Calu3 (cell line): ENCODE measurements at regions of chr11 and their contacts with region 1.

Region 1: GRCh38 chr11:113664069-113664980 is 41.8 kb downstream of the TMPRSS5 start:
- DNase-seq: peak; percentile 23
- H3K4me3 Mint-ChIP-seq: peak overlapping the region; percentile 60
- H3K27ac Mint-ChIP-seq: peak overlapping the region; percentile 99
- H3K4me1 Mint-ChIP-seq: peaks cover 47% of the 10 kb centered on the region
- H3K27me3 Mint-ChIP-seq: no peaks in the 10 kb centered on the region
- CTCF ChIP-seq: no peak

Region 2: DNA sequence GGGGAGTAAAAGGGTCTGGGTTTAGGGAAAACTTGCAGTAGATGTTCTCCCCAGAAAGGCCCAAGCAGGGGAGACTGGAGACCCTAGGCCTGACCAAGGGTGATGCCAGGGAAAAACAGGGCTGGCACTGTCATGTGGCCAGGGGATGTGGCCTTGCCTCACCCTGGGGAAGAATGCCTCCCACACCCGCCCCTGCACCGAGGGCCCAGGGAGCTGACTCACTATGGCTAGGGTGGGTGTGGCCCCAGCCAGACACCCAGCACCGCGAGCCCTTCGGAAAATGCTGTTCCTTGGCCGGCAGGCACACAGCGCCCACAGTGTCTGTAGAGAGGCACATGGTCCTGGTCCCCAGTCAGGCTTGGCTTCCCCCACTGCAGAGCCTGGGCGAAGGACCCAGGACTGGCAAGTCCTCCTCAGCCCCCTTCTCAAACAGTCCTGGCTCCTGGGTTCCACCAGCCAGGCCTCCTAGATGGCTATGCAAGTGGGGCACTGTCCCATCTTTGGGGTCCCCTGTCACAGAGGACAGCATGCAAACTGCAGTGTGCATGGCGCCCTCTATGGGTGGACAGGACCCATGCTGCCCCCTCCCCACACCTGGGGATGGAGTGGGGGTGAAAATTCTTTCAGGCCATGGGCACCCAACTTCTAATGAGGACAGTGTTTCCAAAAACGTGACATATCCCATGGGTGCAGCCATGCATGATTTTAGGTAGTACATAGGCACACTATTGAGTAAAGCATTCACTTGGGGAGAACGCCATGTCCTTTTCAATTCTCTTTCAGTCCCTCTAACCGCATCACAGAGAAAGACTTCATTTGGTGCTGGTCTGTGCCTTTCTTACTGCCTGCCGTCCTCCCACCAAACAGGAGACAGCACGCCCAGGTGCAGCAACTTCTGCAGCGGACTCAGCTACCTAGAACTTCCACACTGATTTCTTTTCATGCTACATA is 26.6 kb after region 1 on chr11:
- CTCF ChIA-PET with region 1: no interaction called
- intact Hi-C with region 1: loop called (anchors 1 kb)
- DNase-seq: peak; percentile 93
- H3K4me3 Mint-ChIP-seq: peak overlapping the region; percentile 24
- H3K27ac Mint-ChIP-seq: peak overlapping the region; percentile 92
- H3K4me1 Mint-ChIP-seq: peaks cover 19% of the 10 kb centered on the region
- H3K27me3 Mint-ChIP-seq: no peaks in the 10 kb centered on the region
- CTCF ChIP-seq: peak; percentile 89

Region 3: DNA sequence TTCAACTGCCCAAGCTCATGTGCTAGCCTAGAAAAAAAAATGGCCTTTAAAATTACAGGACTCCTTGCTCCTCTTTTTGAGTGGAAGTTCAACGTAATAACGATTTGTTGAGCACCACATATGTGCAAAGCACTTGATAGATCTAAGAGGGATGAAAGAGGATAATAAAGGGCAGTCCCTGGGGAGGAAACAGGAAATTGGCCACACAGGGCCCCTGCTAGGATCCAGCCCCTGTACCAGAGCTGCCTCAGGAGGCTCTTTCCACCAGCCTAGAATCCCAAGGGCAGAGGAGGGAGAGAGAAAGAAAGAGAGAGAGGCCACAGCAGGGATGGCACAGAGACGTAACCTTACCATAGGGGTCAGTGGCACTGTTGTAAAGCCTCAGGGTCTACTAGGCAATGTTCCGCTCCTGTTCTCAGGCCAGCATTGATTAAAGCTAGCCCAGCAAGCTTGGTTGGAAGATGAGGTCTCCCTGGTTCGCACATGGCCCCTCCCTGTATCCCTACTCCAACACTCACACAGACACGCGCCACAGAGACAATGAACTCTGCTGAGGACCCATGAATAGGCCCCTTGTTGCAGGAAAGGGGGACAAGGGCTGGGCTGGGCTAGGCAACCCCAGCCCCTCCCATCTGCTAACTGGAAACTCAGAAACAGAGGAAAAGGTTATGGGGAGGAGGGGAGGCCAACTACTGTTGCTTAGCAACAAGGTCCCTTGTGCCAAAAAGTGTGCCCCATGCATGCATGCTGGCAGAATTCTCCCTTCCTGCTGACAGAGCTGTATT is 41.7 kb after region 1 on chr11 and contains the start of gene TMPRSS5:
- CTCF ChIA-PET with region 1: no interaction called
- intact Hi-C with region 1: no loop called
- DNase-seq: peak; percentile 65
- H3K4me3 Mint-ChIP-seq: peak within 1 kb of the TSS; percentile 64
- H3K27ac Mint-ChIP-seq: peak within 1 kb of the TSS; percentile 68
- H3K4me1 Mint-ChIP-seq: peaks cover 31% of the 10 kb centered on the region
- H3K27me3 Mint-ChIP-seq: no peaks in the 10 kb centered on the region
- CTCF ChIP-seq: no peak
- total RNA-seq, gene TMPRSS5: 7.4 and 9.6 TPM in 2 replicates

Region 4: GRCh38 chr11:113725407-113725806 is 61.1 kb after region 1 on chr11:
- CTCF ChIA-PET with region 1: no interaction called
- intact Hi-C with region 1: loop called (anchors 2 kb)
- DNase-seq: no peak
- H3K4me3 Mint-ChIP-seq: no peak overlapping the region
- H3K27ac Mint-ChIP-seq: peak overlapping the region; percentile 88
- H3K4me1 Mint-ChIP-seq: peaks cover 36% of the 10 kb centered on the region
- H3K27me3 Mint-ChIP-seq: no peaks in the 10 kb centered on the region
- CTCF ChIP-seq: no peak

Region 5: GRCh38 chr11:113884361-113884836 is 220.1 kb after region 1 on chr11:
- CTCF ChIA-PET with region 1: no interaction called
- intact Hi-C with region 1: no loop called
- DNase-seq: no peak
- H3K4me3 Mint-ChIP-seq: no peak overlapping the region
- H3K27ac Mint-ChIP-seq: no peak overlapping the region
- H3K4me1 Mint-ChIP-seq: no peaks in the 10 kb centered on the region
- H3K27me3 Mint-ChIP-seq: no peaks in the 10 kb centered on the region
- CTCF ChIP-seq: no peak